Calu3 (cell line): ENCODE measurements at regions of chr7 and their contacts with region 1.

Region 1: DNA sequence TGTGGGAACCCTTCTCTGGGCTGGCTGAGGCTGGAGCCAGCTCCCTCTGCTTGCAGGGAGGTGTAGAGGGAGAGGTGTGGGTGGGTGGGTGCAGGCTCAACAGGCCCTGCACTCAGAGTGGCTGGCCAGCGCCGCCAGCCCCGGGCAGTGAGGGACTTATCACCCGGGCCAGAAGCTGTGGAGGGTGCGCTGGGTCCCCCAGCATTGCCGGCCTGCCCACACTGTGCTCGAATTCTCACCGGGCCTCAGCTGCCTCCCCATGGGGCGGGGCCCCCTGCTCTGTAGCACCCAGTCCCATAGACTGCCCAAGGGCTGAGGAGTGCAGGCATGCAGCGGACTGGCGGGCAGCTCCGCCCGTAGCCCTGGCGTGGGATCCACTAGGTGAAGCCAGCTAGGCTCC is 190.7 kb upstream of the TAC1 start:
- DNase-seq: no peak
- H3K4me3 Mint-ChIP-seq: no peak overlapping the region
- H3K27ac Mint-ChIP-seq: no peak overlapping the region
- H3K4me1 Mint-ChIP-seq: no peaks in the 10 kb centered on the region
- H3K27me3 Mint-ChIP-seq: no peaks in the 10 kb centered on the region
- CTCF ChIP-seq: no peak

Region 2: DNA sequence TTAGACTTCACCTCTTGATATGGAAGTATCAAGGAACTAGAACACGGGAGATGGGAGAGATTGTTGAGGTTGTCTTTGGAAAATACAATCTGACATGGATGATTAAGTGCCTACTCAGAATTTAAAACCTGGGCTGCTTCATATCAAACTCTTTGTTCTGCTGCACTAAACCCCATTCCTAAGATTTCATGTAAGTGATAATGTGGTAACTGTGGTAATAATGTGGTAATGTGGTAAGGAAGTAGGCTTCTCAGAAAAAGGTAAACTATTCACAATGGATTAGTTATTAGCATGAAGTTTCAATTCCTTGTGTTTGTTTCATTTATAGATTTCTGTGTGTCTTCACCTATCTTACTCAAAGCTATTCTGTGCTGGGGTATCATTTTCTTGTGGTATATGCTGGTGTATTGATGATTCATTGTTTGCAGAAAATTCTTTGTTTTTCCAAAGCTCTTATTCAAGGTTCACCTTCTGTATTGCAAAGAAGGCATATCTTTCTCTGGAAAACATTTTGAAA is 60.8 kb after region 1 on chr7:
- CTCF ChIA-PET with region 1: no interaction called
- intact Hi-C with region 1: loop called (anchors 10 kb)
- DNase-seq: no peak
- H3K4me3 Mint-ChIP-seq: no peak overlapping the region
- H3K27ac Mint-ChIP-seq: peak overlapping the region; percentile 75
- H3K4me1 Mint-ChIP-seq: peaks cover 18% of the 10 kb centered on the region
- H3K27me3 Mint-ChIP-seq: no peaks in the 10 kb centered on the region
- CTCF ChIP-seq: no peak